Caco-2 (cell line): ENCODE measurements at regions of chr15 and their contacts with region 1.

Region 1: DNA sequence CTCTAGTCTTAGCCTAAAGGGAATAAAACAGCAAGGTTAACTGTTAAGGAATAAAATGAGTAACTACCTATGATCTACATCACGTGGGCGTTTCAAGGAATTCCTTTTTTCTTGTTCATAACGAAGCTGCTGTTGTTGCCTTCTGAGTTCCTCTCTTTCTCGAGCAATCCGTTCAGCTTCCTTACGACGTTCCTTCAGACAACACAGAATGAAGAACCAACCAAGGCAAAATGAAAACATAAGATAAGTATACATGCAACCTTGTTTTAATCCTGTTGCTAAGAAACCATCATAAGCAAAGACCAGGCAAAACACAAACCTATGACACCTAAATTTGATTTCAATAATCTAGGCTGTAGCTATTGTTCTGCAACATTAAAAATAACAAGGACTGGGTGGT is 44.1 kb downstream of the SLTM start:
- DNase-seq: no peak
- H3K4me3 ChIP-seq: no peak overlapping the region
- H3K4me3 Mint-ChIP-seq: no peak overlapping the region
- H3K27ac Mint-ChIP-seq: no peak overlapping the region
- H3K4me1 ChIP-seq: peaks cover 5% of the 10 kb centered on the region; the same call in 1 of the 2 replicates
- H3K4me1 Mint-ChIP-seq: no peaks in the 10 kb centered on the region
- H3K27me3 ChIP-seq: no peaks in the 10 kb centered on the region
- H3K27me3 Mint-ChIP-seq: no peaks in the 10 kb centered on the region
- CTCF ChIP-seq: no peak

Region 2: GRCh38 chr15:58175955-58176354 is 713.4 kb before region 1 on chr15:
- CTCF ChIA-PET with region 1: no interaction called
- POLR2A ChIA-PET with region 1: interaction called, 10 read pairs
- intact Hi-C with region 1: no loop called
- DNase-seq: no peak
- H3K4me3 ChIP-seq: no peak overlapping the region
- H3K4me3 Mint-ChIP-seq: no peak overlapping the region
- H3K27ac Mint-ChIP-seq: no peak overlapping the region
- H3K4me1 ChIP-seq: no peaks in the 10 kb centered on the region
- H3K4me1 Mint-ChIP-seq: no peaks in the 10 kb centered on the region
- H3K27me3 ChIP-seq: no peaks in the 10 kb centered on the region
- H3K27me3 Mint-ChIP-seq: peaks cover 14% of the 10 kb centered on the region
- CTCF ChIP-seq: no peak

Region 3: GRCh38 chr15:58864602-58865424 is 24.6 kb before region 1 on chr15:
- CTCF ChIA-PET with region 1: no interaction called
- POLR2A ChIA-PET with region 1: no interaction called
- intact Hi-C with region 1: no loop called
- DNase-seq: peak in 1 of 2 experiments; percentile 8
- H3K4me3 ChIP-seq: no peak overlapping the region
- H3K4me3 Mint-ChIP-seq: no peak overlapping the region
- H3K27ac Mint-ChIP-seq: no peak overlapping the region
- H3K4me1 ChIP-seq: no peaks in the 10 kb centered on the region
- H3K4me1 Mint-ChIP-seq: peaks cover 16% of the 10 kb centered on the region
- H3K27me3 ChIP-seq: no peaks in the 10 kb centered on the region
- H3K27me3 Mint-ChIP-seq: no peaks in the 10 kb centered on the region
- CTCF ChIP-seq: no peak

Region 4: DNA sequence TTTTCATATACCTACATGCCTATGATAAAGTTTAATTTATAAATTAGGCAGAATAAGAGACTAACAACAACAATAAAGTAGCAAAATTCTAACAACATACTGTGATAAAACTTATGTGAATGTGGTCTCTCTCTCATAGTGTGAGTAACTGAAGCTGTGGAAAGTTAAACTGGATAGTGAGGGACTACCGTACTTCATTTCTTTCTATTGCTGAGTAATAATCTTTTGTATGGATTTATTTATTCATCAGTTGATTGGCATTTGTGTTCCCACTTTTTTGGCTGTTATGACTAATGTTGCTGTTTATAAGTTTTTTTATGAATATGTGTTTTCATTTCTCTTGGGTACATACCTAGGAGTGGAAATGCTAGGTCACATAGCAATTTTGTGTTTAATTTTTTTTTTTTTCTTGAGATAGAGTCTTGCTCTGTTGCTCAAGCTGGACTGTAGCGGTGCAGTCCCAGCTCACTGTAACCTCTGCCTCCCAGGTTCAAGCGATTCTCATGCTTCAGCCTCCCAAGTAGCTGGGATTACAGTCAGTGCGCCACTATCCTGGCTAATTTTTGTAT is 139.1 kb after region 1 on chr15:
- CTCF ChIA-PET with region 1: no interaction called
- POLR2A ChIA-PET with region 1: no interaction called
- intact Hi-C with region 1: no loop called
- DNase-seq: no peak
- H3K4me3 ChIP-seq: no peak overlapping the region
- H3K4me3 Mint-ChIP-seq: no peak overlapping the region
- H3K27ac Mint-ChIP-seq: no peak overlapping the region
- H3K4me1 ChIP-seq: no peaks in the 10 kb centered on the region
- H3K4me1 Mint-ChIP-seq: no peaks in the 10 kb centered on the region
- H3K27me3 ChIP-seq: no peaks in the 10 kb centered on the region
- H3K27me3 Mint-ChIP-seq: no peaks in the 10 kb centered on the region
- CTCF ChIP-seq: no peak